GM12878 (cell line): ENCODE measurements at regions of chr2 and their contacts with region 1.

Region 1: GRCh38 chr2:74507145-74507925 is at the start of gene PCGF1:
- DNase-seq: peak; percentile 95
- ATAC-seq: peak; percentile 89
- H3K4me3 ChIP-seq: peak within 1 kb of the TSS; percentile 98
- H3K27ac ChIP-seq: peak within 1 kb of the TSS; percentile 97
- H3K4me1 ChIP-seq: peaks cover 27% of the 10 kb centered on the region
- H3K27me3 ChIP-seq: peaks cover 0 to under 1% of the 10 kb centered on the region in 2 experiments; a peak in 1 of 4 replicates
- CTCF ChIP-seq: peak; percentile 64 to 75 (median 71)
- EP300 ChIP-seq: no peak; a peak in 1 of 4 replicates
- POLR2A ChIP-seq: peak; percentile 94
- RAD21 ChIP-seq: peak; percentile 49
- polyA plus RNA-seq, gene PCGF1: 42.5 to 50.8 TPM

Region 2: GRCh38 chr2:72934683-72935610 is 1572.4 kb before region 1 on chr2:
- CTCF ChIA-PET with region 1: no interaction called
- POLR2A ChIA-PET with region 1: no interaction called
- RAD21 ChIA-PET with region 1: no interaction called
- SMC1A ChIA-PET with region 1: no interaction called
- in situ Hi-C with region 1: no loop called
- intact Hi-C with region 1: no loop called
- DNase-seq: no peak
- ATAC-seq: peak; percentile 88
- H3K4me3 ChIP-seq: no peak overlapping the region
- H3K27ac ChIP-seq: no peak overlapping the region
- H3K4me1 ChIP-seq: no peaks in the 10 kb centered on the region; the same call in 1 of the 2 replicates
- H3K27me3 ChIP-seq: no peaks in the 10 kb centered on the region; a peak in 1 of 4 replicates
- CTCF ChIP-seq: peak; percentile 38 to 63 (median 40); a peak in 5 of 6 replicates
- EP300 ChIP-seq: no peak
- POLR2A ChIP-seq: no peak
- RAD21 ChIP-seq: peak; percentile 67

Region 3: GRCh38 chr2:74482801-74483674 is 24.3 kb before region 1 on chr2 and contains the starts of genes CCDC142 and TTC31:
- CTCF ChIA-PET with region 1: interaction called, 34 read pairs
- POLR2A ChIA-PET with region 1: interaction called, 9 read pairs
- RAD21 ChIA-PET with region 1: interaction called, 3 read pairs
- SMC1A ChIA-PET with region 1: interaction called, 10 read pairs
- in situ Hi-C with region 1: no loop called
- intact Hi-C with region 1: loop called (anchors 2 kb)
- DNase-seq: peak; percentile 89
- ATAC-seq: peak; percentile 95
- H3K4me3 ChIP-seq: peak within 1 kb of the TSS; percentile 97
- H3K27ac ChIP-seq: peak within 1 kb of the TSS; percentile 96
- H3K4me1 ChIP-seq: peaks cover 13% of the 10 kb centered on the region
- H3K27me3 ChIP-seq: no peaks in the 10 kb centered on the region; a peak in 1 of 4 replicates
- CTCF ChIP-seq: peak; percentile 93 to 97 (median 97)
- EP300 ChIP-seq: no peak
- POLR2A ChIP-seq: peak; percentile 83
- RAD21 ChIP-seq: peak; percentile 78
- polyA plus RNA-seq, gene CCDC142: 0.93 to 1.5 TPM
- polyA plus RNA-seq, gene TTC31: 6.5 to 7.2 TPM

Region 4: DNA sequence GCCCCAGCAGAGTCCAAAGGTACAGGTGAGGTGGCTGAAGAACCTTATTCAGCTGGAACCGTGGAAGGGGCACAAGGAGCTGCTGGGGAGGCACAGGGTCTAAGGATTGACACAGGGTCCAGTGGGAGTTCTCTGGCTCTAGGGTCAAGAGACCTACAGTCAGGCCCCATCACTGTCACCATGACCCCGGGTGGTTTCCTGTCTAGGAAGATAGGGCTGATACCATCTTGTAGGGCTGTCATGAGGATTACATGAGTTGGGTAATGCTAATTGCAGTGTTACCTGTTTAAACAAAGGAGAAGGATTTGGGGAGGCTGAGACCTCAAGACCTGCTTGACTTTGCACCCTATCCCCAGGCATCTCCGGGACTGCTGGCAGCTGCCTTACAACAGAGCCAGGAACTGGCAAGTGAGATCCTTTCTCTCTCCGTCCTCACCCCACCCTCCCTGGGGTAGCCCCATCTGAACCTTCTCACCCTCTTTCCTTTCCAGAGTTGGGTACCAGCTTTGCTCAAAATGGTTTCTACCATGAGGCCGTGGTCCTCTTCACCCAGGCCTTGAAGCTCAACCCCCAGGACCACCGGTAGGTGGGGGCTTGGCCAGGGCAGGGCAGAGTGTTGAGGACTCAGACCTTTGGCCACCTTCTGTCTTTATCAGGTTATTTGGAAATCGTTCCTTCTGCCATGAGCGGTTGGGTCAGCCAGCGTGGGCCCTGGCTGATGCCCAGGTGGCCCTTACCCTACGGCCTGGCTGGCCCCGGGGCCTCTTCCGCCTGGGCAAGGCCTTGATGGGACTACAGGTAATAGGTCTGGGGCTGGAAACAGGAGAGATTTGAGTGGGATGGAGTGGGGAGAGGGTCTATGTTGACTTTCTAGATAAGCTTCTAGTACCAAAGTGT is 15.4 kb before region 1 on chr2:
- CTCF ChIA-PET with region 1: interaction called, 10 read pairs
- POLR2A ChIA-PET with region 1: interaction called, 3 read pairs
- RAD21 ChIA-PET with region 1: interaction called, 3 read pairs
- SMC1A ChIA-PET with region 1: interaction called, 5 read pairs
- in situ Hi-C with region 1: no loop called
- intact Hi-C with region 1: no loop called
- DNase-seq: no peak
- ATAC-seq: no peak
- H3K4me3 ChIP-seq: no peak overlapping the region
- H3K27ac ChIP-seq: no peak overlapping the region
- H3K4me1 ChIP-seq: no peaks in the 10 kb centered on the region
- H3K27me3 ChIP-seq: no peaks in the 10 kb centered on the region
- CTCF ChIP-seq: no peak
- EP300 ChIP-seq: no peak
- POLR2A ChIP-seq: no peak
- RAD21 ChIP-seq: no peak

Region 5: DNA sequence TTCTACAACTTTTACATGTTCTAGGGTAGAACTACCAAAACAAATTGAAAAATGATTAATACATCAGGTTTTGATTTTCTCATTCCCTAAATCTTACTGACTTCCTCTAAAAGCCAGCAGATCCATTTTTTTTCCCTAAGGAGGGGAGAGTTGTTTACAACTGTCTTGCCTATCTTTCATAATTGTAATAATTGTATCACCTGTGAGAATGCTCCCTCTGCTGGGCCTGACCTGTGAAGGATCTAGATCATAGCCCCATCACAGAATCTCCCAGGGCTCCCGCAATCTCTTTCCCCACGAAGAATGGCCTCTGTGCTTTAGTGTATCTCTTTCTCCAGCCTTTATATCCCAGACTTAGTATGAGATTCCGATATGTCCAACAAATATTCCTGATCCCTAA is 37.3 kb after region 1 on chr2:
- CTCF ChIA-PET with region 1: interaction called, 13 read pairs
- POLR2A ChIA-PET with region 1: interaction called, 4 read pairs
- RAD21 ChIA-PET with region 1: interaction called, 4 read pairs
- SMC1A ChIA-PET with region 1: no interaction called
- in situ Hi-C with region 1: no loop called
- intact Hi-C with region 1: no loop called
- DNase-seq: no peak
- ATAC-seq: no peak
- H3K4me3 ChIP-seq: no peak overlapping the region
- H3K27ac ChIP-seq: no peak overlapping the region
- H3K4me1 ChIP-seq: peaks cover 12% of the 10 kb centered on the region
- H3K27me3 ChIP-seq: no peaks in the 10 kb centered on the region
- CTCF ChIP-seq: peak; percentile 33 to 41 (median 39); a peak in 4 of 6 replicates
- EP300 ChIP-seq: no peak
- POLR2A ChIP-seq: no peak
- RAD21 ChIP-seq: peak; percentile 46; the same call in 1 of the 2 replicates

Region 6: DNA sequence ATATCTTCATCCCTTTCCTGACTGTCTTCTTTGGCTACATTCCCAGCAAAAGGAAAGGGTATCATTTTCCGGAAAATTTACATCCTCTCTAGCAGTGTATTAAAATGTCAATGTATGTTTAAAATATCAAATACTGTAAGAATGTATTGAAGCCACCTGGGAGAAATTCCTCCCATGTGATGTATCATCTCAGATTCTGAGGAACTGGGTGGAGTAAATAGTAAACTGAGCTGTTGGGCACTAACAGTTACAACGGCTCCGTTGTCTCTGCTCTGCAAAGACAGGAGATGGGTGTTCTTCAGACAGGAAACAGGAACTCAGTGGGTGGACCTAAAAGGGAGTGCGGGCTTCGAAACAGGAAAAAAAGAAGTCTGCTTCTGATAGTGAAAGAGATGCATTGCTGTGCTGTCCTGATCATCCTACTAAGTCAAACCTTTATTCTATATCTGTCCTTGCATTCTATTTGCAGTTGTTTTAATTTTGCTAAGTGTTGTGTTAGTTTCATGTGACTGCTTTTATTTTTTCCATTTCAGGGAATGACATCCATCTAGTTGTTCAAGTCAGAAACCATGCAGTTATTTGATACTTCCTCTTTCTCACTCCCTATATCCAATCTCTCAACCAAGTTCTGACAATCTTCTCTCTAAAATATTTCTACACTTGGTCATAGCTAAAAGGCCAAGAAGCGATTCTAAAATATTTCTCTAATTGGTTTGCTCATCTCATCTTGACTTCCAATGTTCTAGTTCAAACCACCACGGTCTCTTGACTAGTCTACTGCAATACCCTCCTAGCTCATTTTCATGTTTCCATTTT is 66.6 kb after region 1 on chr2:
- CTCF ChIA-PET with region 1: interaction called, 7 read pairs
- POLR2A ChIA-PET with region 1: interaction called, 14 read pairs
- RAD21 ChIA-PET with region 1: interaction called, 3 read pairs
- SMC1A ChIA-PET with region 1: interaction called, 6 read pairs
- in situ Hi-C with region 1: no loop called
- intact Hi-C with region 1: no loop called
- DNase-seq: peak; percentile 59
- ATAC-seq: peak; percentile 54
- H3K4me3 ChIP-seq: peak overlapping the region; percentile 13; the same call in 1 of the 2 replicates
- H3K27ac ChIP-seq: peak overlapping the region; percentile 43
- H3K4me1 ChIP-seq: peaks cover 77% of the 10 kb centered on the region
- H3K27me3 ChIP-seq: no peaks in the 10 kb centered on the region
- CTCF ChIP-seq: no peak
- EP300 ChIP-seq: no peak; a peak in 1 of 4 replicates
- POLR2A ChIP-seq: no peak
- RAD21 ChIP-seq: no peak

Region 7: DNA sequence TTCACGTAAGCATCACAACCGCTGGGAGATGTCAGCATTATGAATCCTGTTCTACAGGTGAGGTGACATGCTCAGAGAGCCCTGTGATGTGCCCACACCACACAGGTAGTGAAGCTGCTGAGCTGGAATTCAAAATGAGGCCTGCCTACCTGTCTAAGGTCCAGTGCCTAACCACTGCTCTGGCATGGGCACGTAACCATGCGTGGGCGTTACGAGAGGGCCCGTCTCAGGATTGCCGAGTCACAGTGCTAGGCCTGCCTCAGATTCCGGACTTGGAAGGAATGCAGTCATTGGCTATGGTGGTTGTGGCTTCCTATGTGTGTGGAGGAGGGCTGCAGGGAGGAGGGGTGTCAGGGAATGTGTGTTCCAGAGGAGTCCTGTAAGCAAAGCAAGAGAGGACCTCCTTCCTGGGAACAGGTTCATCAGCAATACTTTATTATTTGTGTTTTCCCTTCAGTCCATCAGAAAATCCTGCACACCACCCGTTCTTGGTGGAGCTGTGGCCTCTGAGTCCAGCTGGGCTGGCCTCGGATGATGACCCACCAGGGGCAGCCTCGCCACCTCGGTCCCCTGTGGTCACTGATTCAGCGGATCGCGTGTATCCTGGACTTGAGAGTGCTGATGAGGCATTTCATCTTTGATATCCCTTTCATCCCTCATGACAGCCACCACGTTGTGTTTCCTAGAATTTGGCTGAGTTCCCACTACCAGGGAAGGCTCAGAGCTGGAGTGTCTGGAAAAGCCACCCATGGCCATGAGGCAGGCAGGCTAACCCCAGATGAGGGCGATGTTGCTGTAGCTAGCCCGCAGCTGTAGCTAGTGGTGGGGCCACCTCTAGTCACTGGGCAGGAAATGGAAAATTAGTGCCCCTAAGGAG is 357.7 kb after region 1 on chr2:
- CTCF ChIA-PET with region 1: no interaction called
- POLR2A ChIA-PET with region 1: no interaction called
- RAD21 ChIA-PET with region 1: no interaction called
- SMC1A ChIA-PET with region 1: no interaction called
- in situ Hi-C with region 1: no loop called
- intact Hi-C with region 1: no loop called
- DNase-seq: no peak
- ATAC-seq: no peak
- H3K4me3 ChIP-seq: no peak overlapping the region
- H3K27ac ChIP-seq: no peak overlapping the region
- H3K4me1 ChIP-seq: peaks cover 10% of the 10 kb centered on the region
- H3K27me3 ChIP-seq: no peaks in the 10 kb centered on the region
- CTCF ChIP-seq: no peak
- EP300 ChIP-seq: no peak
- POLR2A ChIP-seq: no peak
- RAD21 ChIP-seq: no peak